Naive thymus-derived CD4-positive, alpha-beta T cell (primary cell): ENCODE measurements at regions of chr6 and their contacts with region 1.

Region 1: DNA sequence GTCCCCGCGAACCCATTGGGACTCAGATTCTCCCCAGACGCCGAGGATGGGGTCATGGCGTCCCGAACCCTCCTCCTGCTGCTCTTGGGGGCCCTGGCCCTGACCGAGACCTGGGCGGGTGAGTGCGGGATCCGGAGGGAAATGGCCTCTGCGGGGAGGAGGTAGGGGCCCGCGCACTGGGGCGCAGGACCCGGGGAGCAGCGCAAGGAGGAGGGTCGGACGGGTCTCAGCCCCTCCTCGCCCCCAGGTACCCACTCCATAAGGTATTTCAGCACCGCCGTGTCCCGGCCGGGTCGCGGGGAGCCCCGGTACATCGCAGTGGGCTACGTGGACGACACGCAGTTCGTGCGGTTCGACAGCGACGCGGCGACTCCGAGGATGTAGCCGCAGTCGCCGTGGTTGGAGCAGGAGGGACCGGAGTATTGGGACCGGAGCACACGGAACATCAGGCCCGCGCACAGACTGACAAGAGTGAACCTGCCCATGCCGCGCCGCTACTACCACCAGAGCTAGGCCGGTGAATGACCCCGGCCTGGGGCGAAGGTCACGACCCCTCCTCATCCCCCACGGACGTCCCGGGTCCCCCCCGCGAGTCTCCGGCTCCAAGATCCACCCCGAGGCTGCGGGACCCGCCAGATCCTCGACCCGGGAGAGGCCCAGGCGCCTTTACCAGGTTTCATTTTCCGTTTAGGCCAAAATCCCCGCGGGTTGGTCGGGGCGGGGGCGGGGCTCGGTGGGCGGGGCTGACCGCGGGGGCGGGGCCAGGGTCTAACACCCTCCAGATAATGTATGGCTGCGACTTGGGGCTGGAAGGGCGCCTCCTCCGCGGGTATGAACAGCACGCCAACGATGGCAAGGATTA is 15.7 kb upstream of the HLA-A start:
- DNase-seq: peak in 8 of 9 donors; percentile 40 to 90 (median 78)
- ATAC-seq: peak; percentile 96
- H3K4me3 ChIP-seq: peak overlapping the region; percentile 68
- H3K4me3 Mint-ChIP-seq: peak overlapping the region in 9 of 10 donors; percentile 83 to 97 (median 94)
- H3K27ac ChIP-seq: peak overlapping the region; percentile 95
- H3K27ac Mint-ChIP-seq: peak overlapping the region in 8 of 9 donors; percentile 90 to 99 (median 97)
- H3K4me1 ChIP-seq: peaks cover 4 to 15% of the 10 kb centered on the region in 2 donors
- H3K4me1 Mint-ChIP-seq: peaks cover 1 to 51% (median 15%) of the 10 kb centered on the region in 7 donors
- H3K27me3 ChIP-seq: no peaks in the 10 kb centered on the region
- H3K27me3 Mint-ChIP-seq: peaks cover 0 to 3% (median 0%) of the 10 kb centered on the region in 5 donors

Region 2: DNA sequence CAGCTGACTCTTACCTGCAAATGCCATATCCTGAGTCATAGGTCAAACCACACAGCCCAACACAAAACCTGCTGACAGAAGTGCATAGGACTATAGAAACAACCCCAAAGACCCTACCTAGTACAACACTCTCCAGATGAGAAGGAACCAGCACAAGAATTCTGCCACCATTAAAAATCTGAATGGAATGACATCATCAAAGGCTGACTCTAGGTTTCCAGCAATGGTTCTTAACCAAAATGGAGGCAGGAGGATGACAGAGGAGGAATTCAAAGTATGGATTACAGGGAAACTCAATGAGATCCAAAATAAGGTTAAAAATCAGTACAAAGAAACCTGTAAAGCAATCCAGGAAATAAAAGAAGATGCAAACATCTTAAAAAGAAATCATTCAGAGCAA is 594.0 kb before region 1 on chr6:
- CTCF ChIA-PET with region 1: no interaction called
- POLR2A ChIA-PET with region 1: no interaction called
- intact Hi-C with region 1: no loop called
- DNase-seq: no peak
- ATAC-seq: no peak
- H3K4me3 ChIP-seq: no peak overlapping the region
- H3K4me3 Mint-ChIP-seq: no peak overlapping the region
- H3K27ac ChIP-seq: no peak overlapping the region
- H3K27ac Mint-ChIP-seq: no peak overlapping the region
- H3K4me1 ChIP-seq: no peaks in the 10 kb centered on the region
- H3K4me1 Mint-ChIP-seq: no peaks in the 10 kb centered on the region
- H3K27me3 ChIP-seq: no peaks in the 10 kb centered on the region
- H3K27me3 Mint-ChIP-seq: peaks cover 8 to 76% (median 68%) of the 10 kb centered on the region in 5 donors

Region 3: DNA sequence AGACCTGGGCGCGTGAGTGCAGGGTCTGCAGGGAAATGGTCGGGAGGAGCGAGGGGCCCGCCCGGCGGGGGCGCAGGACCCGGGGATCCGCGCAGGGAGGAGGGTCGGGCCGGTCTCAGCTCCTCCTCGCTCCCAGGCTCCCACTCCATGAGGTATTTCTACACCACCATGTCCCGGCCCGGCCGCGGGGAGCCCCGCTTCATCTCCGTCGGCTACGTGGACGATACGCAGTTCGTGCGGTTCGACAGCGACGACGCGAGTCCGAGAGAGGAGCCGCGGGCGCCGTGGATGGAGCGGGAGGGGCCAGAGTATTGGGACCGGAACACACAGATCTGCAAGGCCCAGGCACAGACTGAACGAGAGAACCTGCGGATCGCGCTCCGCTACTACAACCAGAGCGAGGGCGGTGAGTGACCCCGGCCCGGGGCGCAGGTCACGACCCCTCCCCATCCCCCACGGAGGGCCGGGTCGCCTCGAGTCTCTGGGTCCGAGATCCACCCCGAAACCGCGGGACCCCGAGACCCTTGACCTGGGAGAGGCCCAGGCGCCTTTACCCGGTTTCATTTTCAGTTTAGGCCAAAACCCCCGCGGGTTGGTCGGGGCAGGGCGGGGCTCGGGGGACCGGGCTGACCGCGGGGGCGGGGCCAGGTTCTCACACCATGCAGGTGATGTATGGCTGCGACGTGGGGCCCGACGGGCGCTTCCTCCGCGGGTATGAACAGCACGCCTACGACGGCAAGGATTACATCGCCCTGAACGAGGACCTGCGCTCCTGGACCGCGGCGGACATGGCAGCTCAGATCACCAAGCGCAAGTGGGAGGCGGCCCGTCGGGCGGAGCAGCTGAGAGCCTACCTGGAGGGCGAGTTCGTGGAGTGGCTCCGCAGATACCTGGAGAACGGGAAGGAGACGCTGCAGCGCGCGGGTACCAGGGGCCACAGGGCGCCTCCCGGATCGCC is 38.5 kb before region 1 on chr6:
- CTCF ChIA-PET with region 1: no interaction called
- POLR2A ChIA-PET with region 1: no interaction called
- intact Hi-C with region 1: loop called (anchors 1 kb)
- DNase-seq: peak in 8 of 9 donors; percentile 36 to 89 (median 72)
- ATAC-seq: peak; percentile 91
- H3K4me3 ChIP-seq: peak overlapping the region; percentile 73
- H3K4me3 Mint-ChIP-seq: peak overlapping the region in 9 of 10 donors; percentile 79 to 95 (median 94)
- H3K27ac ChIP-seq: peak overlapping the region; percentile 94
- H3K27ac Mint-ChIP-seq: peak overlapping the region in 8 of 9 donors; percentile 72 to 98 (median 94)
- H3K4me1 ChIP-seq: peaks cover 3 to 7% of the 10 kb centered on the region in 2 donors
- H3K4me1 Mint-ChIP-seq: peaks cover 0 to 27% (median 20%) of the 10 kb centered on the region in 7 donors
- H3K27me3 ChIP-seq: no peaks in the 10 kb centered on the region
- H3K27me3 Mint-ChIP-seq: peaks cover 0 to 18% (median 0%) of the 10 kb centered on the region in 5 donors

Region 4: GRCh38 chr6:29909985-29910384 is 16.7 kb before region 1 on chr6:
- CTCF ChIA-PET with region 1: no interaction called
- POLR2A ChIA-PET with region 1: no interaction called
- intact Hi-C with region 1: no loop called
- DNase-seq: no peak
- ATAC-seq: no peak
- H3K4me3 ChIP-seq: no peak overlapping the region
- H3K4me3 Mint-ChIP-seq: no peak overlapping the region
- H3K27ac ChIP-seq: no peak overlapping the region
- H3K27ac Mint-ChIP-seq: no peak overlapping the region
- H3K4me1 ChIP-seq: no peaks in the 10 kb centered on the region
- H3K4me1 Mint-ChIP-seq: peaks cover 0 to 13% (median 0%) of the 10 kb centered on the region in 7 donors
- H3K27me3 ChIP-seq: no peaks in the 10 kb centered on the region
- H3K27me3 Mint-ChIP-seq: peaks cover 0 to 20% (median 14%) of the 10 kb centered on the region in 5 donors